Cardiac septum (tissue), 1 donor: ENCODE measurements at regions of chr13 and their contacts with region 1.

Region 1: GRCh38 chr13:76886292-76887075 is at the start of gene KCTD12:
- DNase-seq: peak; percentile 93
- total RNA-seq, gene KCTD12: 34.9 TPM

Region 2: GRCh38 chr13:76667551-76667950 is 218.9 kb before region 1 on chr13:
- intact Hi-C with region 1: loop called (anchors 5 kb)
- DNase-seq: no peak

Region 3: DNA sequence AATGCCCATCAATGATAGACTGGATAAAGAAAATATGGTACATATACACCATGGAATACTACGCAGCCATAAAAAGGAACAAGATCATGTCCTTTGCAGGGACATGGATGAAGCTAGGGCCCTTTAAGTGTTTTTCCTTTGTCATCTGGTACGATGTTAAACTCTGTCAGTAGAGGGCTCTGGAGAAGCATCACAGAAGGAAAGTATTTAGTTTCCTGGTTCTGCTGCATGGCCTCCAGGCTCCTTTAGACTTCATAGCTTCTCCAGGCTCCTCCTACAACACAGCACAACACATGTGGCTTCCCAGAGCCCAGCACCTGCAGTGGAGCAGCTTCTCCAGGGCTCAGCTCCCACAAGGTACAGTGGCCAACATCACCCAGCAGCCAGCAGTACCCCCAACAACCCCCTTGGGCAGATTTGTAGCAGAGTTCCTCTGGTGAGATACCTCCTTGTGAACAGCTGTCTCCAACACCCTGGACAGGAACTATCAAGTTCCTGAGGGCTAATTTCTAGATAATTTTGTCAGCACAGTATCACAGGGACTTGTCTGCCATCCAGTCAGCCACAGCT is 63.7 kb before region 1 on chr13:
- intact Hi-C with region 1: loop called (anchors 5 kb)
- DNase-seq: no peak

Region 4: DNA sequence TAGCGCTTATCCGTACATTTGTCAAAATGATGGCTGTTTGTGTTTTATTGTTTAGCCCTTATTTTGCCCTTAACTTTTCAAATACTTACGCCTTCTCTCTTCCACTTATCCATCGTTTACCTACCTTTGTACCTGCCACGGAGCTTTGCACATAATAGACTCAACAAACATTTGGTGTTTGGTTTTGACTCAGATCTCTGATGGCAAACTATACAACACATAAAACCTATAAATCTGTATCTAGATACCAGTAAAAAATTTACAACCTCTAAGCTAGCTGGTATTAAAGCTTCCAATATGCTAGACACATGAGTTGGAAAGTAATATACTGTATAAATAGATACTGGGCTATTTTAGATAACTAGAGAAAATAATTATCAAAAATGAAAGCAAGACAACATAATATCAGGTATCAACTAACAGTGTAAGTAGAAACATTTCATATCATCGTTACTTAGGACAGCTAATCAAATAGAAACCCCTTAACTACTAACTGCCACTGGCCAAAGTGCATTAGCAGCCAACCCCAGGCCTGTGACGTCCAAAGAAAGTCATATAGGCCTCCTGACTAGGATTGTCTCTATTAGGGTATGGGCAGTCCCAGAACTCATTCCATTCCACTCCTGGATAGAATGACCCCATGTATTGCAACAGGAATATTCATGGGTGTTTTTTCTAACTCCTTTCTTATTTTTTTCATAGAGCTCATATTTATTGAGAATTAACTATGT is 54.1 kb before region 1 on chr13:
- intact Hi-C with region 1: loop called (anchors 2 kb)
- DNase-seq: no peak